Activated B cell treated with CpG ODN at 0.5 μM for 24 hours (primary cell): ENCODE measurements at regions of chr2 and their contacts with region 1.

Region 1: GRCh38 chr2:60581433-60582282 is 28.2 kb upstream of the BCL11A start:
- DNase-seq: peak; percentile 85
- ATAC-seq: peak; percentile 100
- H3K4me3 Mint-ChIP-seq: peak overlapping the region; percentile 70
- H3K27ac Mint-ChIP-seq: no peak overlapping the region
- H3K4me1 Mint-ChIP-seq: peaks cover 3% of the 10 kb centered on the region
- H3K27me3 Mint-ChIP-seq: peaks cover 10% of the 10 kb centered on the region
- CTCF ChIP-seq: peak; percentile 64

Region 2: DNA sequence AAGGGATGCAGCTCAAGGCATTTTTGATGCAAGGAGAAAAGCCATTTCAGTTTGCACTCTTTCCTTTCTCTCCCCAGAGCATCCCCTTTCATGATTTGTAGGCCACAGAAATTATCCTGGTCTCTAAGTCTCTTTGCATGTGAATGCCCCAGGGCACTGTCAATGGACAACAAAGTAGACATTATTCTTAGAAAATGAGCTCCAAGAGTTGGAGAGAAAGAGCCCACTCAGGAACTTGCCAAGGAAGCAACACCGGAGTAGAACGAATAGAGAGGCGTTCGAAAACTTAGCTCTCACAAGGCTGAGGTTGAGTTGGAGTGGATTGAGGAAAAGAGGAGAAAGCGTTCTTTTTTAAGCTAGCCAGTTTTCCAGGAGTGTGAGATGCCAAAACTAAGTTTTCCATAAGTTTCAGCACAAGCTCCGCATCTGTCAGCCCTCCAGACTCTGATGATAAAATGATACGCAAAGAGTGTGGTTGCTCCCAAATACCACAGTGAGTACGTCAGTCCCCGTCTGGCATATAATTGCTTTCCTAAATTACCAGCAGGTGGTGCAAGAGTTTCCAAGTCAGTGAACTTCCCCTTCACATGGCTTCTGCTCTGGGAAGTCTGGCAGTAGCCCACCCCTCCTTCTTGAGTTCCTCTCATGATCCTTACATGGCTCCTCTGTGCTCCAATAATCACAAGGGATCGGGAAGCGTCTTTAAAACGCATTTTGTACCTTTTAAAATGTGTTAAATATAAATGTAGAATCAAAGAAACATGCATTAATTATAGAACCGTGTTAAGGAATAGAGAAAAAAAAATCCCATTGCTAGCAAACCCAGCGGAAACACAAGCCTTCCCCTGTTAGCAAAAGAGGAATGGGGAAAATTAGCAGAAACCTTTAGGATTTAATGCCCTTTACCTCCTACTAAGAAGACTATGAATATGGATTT is 1279.9 kb before region 1 on chr2:
- CTCF ChIA-PET with region 1: interaction called, 43 read pairs
- POLR2A ChIA-PET with region 1: no interaction called
- intact Hi-C with region 1: loop called (anchors 1 kb)
- DNase-seq: no peak
- ATAC-seq: peak; percentile 67
- H3K4me3 Mint-ChIP-seq: no peak overlapping the region
- H3K27ac Mint-ChIP-seq: no peak overlapping the region
- H3K4me1 Mint-ChIP-seq: no peaks in the 10 kb centered on the region
- H3K27me3 Mint-ChIP-seq: peaks cover 2% of the 10 kb centered on the region
- CTCF ChIP-seq: no peak

Region 3: DNA sequence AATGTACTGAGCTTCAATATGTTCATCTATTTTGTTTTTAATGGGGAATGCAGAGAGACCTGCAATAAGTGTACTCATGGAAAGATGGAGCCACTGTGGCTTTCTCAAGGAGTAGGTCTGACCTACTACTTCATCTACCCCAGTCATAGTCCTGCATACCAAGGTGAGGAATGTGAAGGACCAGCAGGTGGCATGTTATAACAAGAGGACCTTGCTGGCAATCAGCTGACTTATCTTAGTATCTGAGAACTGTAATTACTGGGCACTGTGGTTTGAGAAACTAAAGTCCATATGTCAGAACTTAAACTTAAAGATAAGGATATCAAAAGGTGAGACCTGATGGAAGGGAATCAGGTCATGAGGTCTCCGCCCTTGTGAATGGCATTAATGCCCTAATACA is 1132.4 kb before region 1 on chr2:
- CTCF ChIA-PET with region 1: interaction called, 11 read pairs
- POLR2A ChIA-PET with region 1: no interaction called
- intact Hi-C with region 1: loop called (anchors 1 kb)
- DNase-seq: no peak
- ATAC-seq: peak; percentile 77
- H3K4me3 Mint-ChIP-seq: no peak overlapping the region
- H3K27ac Mint-ChIP-seq: no peak overlapping the region
- H3K4me1 Mint-ChIP-seq: no peaks in the 10 kb centered on the region
- H3K27me3 Mint-ChIP-seq: no peaks in the 10 kb centered on the region
- CTCF ChIP-seq: no peak

Region 4: DNA sequence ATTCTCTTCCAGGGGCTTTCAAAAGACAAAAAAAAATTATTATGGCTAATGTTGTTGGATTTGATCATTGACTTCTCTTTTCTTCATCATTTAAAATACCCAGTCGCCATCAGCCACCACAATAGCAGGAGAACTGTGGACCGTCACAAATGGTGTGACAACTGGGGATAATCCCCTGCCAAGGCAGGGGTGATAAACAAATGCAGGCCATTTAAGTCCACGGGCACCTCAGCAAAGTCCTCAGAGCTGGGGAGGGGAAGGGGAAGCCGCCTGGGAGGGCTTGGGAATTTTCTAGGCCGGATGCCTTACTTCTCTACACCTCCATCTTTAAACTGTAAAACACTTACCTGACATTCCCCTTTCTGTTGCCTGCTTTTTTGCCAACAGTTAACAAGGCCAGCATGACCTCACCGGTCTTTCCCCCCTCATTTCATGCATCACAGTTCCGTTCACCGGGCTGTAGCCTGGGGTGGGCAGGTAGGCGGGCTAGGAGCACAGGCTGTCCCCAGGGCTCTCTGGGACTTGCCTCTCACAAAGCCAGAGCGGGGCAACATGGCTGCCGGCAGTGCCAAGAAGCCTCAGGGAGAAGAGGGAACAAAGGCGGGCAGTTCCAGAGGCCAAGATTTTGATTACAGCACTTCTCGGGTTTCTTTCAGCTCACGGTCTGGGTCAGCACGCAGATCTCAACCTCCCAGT is 848.6 kb before region 1 on chr2:
- CTCF ChIA-PET with region 1: no interaction called
- POLR2A ChIA-PET with region 1: no interaction called
- intact Hi-C with region 1: no loop called
- DNase-seq: no peak
- ATAC-seq: peak; percentile 47
- H3K4me3 Mint-ChIP-seq: no peak overlapping the region
- H3K27ac Mint-ChIP-seq: no peak overlapping the region
- H3K4me1 Mint-ChIP-seq: no peaks in the 10 kb centered on the region
- H3K27me3 Mint-ChIP-seq: no peaks in the 10 kb centered on the region
- CTCF ChIP-seq: no peak

Region 5: GRCh38 chr2:60079562-60079961 is 502.1 kb before region 1 on chr2:
- CTCF ChIA-PET with region 1: no interaction called
- POLR2A ChIA-PET with region 1: no interaction called
- intact Hi-C with region 1: no loop called
- DNase-seq: no peak
- ATAC-seq: no peak
- H3K4me3 Mint-ChIP-seq: no peak overlapping the region
- H3K27ac Mint-ChIP-seq: no peak overlapping the region
- H3K4me1 Mint-ChIP-seq: no peaks in the 10 kb centered on the region
- H3K27me3 Mint-ChIP-seq: no peaks in the 10 kb centered on the region
- CTCF ChIP-seq: no peak

Region 6: GRCh38 chr2:60674524-60675165 is 93.0 kb after region 1 on chr2:
- CTCF ChIA-PET with region 1: interaction called, 15 read pairs
- POLR2A ChIA-PET with region 1: no interaction called
- intact Hi-C with region 1: loop called (anchors 1 kb)
- DNase-seq: peak; percentile 77
- ATAC-seq: peak; percentile 100
- H3K4me3 Mint-ChIP-seq: no peak overlapping the region
- H3K27ac Mint-ChIP-seq: no peak overlapping the region
- H3K4me1 Mint-ChIP-seq: peaks cover 3% of the 10 kb centered on the region
- H3K27me3 Mint-ChIP-seq: peaks cover 2% of the 10 kb centered on the region
- CTCF ChIP-seq: peak; percentile 96